ENCODE measurements at regions of chr5 and their contacts with region 1.

Region 1: DNA sequence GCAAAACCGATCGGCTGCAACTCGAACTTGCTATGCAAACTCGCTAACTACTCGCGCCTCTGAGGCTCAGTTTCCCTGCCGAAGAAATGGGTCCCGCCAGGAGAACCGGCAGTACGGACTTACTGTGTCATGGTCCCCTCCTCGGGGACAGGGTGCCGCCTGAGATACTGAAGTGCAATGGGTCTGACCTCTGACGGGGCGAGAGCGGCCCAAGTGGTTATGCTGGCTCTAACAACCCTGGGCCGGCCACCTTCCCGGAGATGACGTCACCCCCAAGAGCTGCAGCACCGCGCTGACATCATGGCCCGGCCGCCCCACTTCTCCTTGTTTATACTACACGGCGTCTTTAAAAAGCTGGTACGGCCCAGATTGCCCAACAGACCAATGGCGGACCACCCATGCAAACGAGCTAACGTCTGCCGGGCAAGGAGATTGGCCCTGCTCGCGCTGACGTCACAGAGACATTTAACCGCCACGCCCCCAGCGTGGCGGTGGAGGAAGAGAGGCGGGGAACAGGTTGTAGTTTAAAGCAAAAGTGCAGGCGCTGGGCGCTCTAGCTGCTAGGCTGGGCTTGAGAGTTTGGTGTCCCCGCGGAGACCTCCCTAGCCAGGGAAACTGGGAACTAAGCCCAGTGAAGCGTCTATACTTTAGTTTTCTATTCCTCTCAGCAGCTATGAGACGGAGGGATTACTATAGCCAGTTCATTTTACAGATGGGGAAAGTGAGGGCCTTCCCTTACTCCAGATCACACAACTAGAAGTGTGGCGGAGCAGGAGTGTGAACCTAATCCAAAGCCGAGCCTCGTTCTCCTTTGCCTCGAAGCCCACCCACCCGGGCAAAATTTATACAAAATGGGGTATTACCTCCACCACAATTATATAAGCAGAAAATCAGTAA is 654 bp upstream of the RNF44 start:
- DNase-seq: peak; percentile 100
- H3K4me3 ChIP-seq: peak overlapping the region; percentile 76 to 85
- H3K27ac ChIP-seq: peak overlapping the region; percentile 91 to 97
- H3K4me1 ChIP-seq: peaks cover 10 to 42% of the 10 kb centered on the region in 2 donors
- H3K27me3 ChIP-seq: no peaks in the 10 kb centered on the region
- CTCF ChIP-seq: no peak

Region 2: DNA sequence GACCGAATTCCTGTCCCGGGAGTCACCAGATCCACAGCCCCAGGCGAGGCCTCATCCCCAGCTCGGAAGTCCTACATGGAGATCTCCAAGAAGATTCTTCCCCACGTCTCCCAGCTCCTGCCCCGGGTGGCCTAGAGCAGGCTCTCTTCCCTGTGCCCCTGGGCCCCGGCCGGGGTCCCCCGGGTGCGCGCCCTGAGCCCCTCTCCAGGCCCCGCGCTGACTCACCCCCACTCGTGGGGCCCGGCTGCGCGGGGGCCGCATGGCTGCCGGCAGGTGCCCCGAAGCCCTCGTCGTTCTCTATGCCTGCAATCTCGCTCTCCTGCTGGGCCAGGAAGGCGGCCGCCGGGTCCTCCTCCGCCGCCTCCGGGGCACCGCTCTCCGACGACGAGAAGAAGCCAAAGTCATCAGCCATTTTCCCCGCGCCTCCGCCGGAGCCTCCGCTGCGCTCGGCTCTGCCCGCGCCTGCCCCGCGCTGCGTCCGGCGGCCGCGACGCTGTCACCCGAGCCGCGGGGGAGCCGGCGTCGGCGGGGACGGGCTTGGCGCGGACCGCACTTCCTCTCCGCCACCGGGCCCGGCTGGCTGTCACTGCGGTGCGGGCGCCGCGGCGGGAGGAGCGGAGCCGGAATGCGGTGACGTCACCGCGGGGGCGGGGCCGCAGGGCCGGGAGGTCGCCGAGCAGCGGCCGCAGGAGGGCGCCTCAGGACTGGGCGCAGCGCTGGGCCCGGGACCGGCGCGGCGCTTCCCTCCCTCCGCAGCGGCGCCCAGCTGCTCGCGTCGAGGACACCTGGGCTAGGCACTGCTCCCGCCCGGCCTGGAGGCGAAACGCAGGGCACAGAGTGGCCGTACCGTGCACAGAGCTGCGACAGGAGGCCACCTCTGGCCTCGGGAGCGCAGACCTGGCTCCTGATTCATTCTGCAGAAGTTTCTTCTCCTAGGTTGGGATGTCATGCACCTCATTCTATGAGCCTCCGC is 121.6 kb before region 1 on chr5 and contains the start of gene CLTB:
- intact Hi-C with region 1: loop called (anchors 1 kb)
- DNase-seq: peak; percentile 49 to 94
- H3K4me3 ChIP-seq: peak within 1 kb of the TSS; percentile 64 to 71
- H3K27ac ChIP-seq: peak within 1 kb of the TSS; percentile 80 to 92
- H3K4me1 ChIP-seq: peaks cover 0 to 32% of the 10 kb centered on the region in 2 donors
- H3K27me3 ChIP-seq: no peaks in the 10 kb centered on the region
- CTCF ChIP-seq: peak; percentile 23 to 97 (median 54)
- total RNA-seq, gene CLTB: 189 TPM

Region 3: GRCh38 chr5:176447982-176448608 is 89.8 kb before region 1 on chr5 and contains the start of gene FAF2:
- intact Hi-C with region 1: loop called (anchors 1 kb)
- DNase-seq: peak; percentile 87 to 98
- H3K4me3 ChIP-seq: peak within 1 kb of the TSS; percentile 88 to 94
- H3K27ac ChIP-seq: peak within 1 kb of the TSS; percentile 91 to 92
- H3K4me1 ChIP-seq: peaks cover 6 to 17% of the 10 kb centered on the region in 2 donors
- H3K27me3 ChIP-seq: no peaks in the 10 kb centered on the region
- CTCF ChIP-seq: peak; percentile 97 to 98 (median 97)
- total RNA-seq, gene FAF2: 18.7 TPM

Region 4: DNA sequence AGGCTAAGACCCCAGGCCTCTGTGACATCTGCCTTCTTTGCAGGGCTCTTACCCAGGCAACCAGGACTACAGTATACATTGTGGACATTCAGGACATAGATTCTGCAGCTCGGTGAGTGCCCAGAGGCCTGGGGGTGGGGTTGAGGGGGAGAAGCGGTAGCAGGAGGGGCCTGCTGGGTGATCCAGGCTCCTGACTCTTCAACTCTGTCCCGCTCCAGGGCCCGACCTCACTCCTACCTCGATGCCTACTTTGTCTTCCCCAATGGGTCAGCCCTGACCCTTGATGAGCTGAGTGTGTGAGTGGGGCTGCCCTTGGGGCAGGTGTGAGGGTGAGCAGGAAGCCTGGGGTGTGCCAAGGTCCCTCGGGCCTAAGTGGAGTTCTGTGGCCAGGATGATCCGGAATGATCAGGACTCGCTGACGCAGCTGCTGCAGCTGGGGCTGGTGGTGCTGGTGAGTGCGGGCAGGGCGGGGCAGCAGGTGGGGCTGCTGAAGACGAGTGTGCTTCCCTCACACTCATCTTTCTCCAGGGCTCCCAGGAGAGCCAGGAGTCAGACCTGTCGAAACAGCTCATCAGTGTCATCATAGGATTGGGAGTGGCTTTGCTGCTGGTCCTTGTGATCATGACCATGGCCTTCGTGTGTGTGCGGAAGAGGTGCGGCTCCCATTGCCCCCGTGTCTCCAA is 52.3 kb after region 1 on chr5:
- intact Hi-C with region 1: no loop called
- DNase-seq: no peak
- H3K4me3 ChIP-seq: no peak overlapping the region
- H3K27ac ChIP-seq: no peak overlapping the region
- H3K4me1 ChIP-seq: no peaks in the 10 kb centered on the region
- H3K27me3 ChIP-seq: no peaks in the 10 kb centered on the region
- CTCF ChIP-seq: no peak

Region 5: DNA sequence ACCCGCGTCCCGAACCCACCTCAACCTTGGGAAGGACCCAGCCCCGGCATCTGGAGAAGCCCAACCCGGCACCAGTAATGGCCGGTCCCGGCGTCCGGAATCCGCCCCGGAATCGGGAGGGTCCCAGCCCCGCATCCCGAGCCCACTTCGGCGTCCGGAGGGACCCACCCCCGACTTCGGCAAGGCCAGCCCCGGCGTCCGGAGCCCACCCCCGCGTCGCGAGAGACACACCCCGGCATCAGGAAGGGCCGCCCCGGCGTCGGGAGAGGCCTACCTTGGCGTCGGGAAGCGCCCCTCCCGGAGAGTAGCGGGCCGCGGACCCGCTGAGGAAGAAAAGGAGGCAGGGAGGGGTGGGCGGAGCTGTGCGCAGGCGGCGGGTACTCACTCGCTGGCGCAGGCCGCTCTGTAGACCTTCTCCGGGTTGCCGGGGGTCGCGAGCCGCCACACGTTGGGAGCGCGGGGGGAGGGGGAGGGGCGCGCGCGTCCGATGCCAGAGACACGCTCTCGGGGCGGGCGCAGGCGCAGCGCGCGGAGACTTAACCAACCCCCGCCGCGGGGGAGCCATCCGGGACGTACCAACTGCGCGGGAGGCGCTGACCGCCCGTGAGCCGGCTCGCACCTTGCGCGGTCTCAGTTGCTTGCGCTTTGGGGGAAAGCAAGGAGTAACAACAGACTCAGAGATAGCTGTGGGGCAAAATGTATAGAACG is 468.6 kb after region 1 on chr5 and contains the start of gene UIMC1:
- intact Hi-C with region 1: loop called (anchors 5 kb)
- DNase-seq: peak; percentile 42 to 94
- H3K4me3 ChIP-seq: peak within 1 kb of the TSS; percentile 81 to 94
- H3K27ac ChIP-seq: peak within 1 kb of the TSS; percentile 93 to 97
- H3K4me1 ChIP-seq: peaks cover 0 to 7% of the 10 kb centered on the region in 2 donors
- H3K27me3 ChIP-seq: no peaks in the 10 kb centered on the region
- CTCF ChIP-seq: no peak
- total RNA-seq, gene UIMC1: 32.5 TPM